PC-9 (cell line): ENCODE measurements at regions of chr16 and their contacts with region 1.

Region 1: DNA sequence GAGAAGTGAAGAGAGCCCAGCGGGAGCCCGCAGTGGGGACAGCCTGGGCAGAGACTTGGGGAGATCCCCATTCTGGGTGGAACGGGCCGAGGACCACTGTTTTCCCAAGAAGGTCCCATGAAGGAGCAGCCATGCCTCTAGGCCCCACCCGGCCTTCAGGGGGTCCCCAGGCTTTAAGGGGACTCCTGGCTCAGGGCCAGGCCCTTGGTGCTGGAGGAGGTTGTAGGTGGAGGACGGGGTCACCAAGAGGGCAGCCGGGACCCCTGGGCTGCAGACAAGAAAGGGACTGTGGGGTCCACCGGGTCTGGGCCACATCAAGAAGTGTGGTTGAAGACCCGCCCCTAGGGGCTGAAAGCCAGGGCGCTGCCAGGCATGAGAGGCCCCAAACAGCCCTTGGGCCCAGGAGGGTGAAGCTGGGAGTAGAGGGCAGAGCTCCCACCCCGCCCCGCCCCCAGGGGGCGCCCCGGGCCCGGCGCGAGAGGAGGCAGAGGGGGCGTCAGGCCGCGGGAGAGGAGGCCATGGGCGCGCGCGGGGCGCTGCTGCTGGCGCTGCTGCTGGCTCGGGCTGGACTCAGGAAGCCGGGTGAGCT is at the start of gene PRSS21:
- DNase-seq: peak; percentile 38 to 75
- H3K4me3 ChIP-seq: peak within 1 kb of the TSS; percentile 81
- H3K27ac ChIP-seq: no peak within 1 kb of the TSS
- H3K4me1 ChIP-seq: peaks cover 28% of the 10 kb centered on the region
- H3K27me3 ChIP-seq: no peaks in the 10 kb centered on the region
- CTCF ChIP-seq: peak; percentile 73
- total RNA-seq, gene PRSS21: 61.2 and 77.4 TPM in 2 replicates

Region 2: DNA sequence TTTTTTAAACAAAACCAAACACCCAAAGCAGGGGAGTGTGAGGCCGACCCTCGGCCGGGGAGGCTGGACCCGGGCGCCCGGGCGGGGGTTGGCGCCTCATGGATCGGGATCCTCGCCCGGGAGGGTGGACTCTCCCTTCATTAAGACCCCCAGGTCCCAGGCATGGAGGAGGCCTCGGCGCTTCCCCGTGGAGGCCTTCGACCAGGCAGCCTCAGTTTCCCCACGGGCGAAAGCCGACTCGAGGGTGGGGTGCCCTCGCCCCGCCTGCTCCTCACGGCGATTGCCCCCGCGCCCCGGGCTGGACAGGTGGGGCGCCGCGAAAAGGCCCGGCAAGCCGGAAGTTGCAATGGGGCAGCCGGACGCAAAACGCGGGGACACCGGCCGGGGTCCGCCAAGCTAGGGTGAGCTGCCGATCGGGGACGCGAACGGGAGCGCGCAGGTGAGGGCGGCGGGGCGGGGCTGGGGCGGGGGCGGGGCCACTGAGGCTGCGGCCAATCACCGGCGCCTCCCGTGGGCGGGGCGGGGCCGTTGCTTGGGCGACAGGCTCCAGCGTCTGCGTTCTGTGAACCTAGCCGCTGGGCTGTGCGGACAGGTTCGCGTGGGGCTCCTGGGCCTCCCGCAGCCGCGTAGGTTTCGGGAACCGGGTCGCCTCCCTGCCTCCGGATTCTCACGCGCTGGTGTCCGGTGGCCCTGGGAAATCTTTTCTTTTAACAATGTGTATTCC is 289.5 kb after region 1 on chr16:
- CTCF ChIA-PET with region 1: no interaction called
- POLR2A ChIA-PET with region 1: interaction called, 16 read pairs
- intact Hi-C with region 1: no loop called
- DNase-seq: peak; percentile 80 to 96
- H3K4me3 ChIP-seq: peak overlapping the region; percentile 97
- H3K27ac ChIP-seq: peak overlapping the region; percentile 59
- H3K4me1 ChIP-seq: peaks cover 6% of the 10 kb centered on the region
- H3K27me3 ChIP-seq: no peaks in the 10 kb centered on the region
- CTCF ChIP-seq: no peak